ENCODE measurements at regions of chr6 and their contacts with region 1.

Region 1: GRCh38 chr6:52263709-52264540 is 19.6 kb upstream of the IL17F start:
- DNase-seq: peak; percentile 78
- ATAC-seq: peak; percentile 83
- H3K4me3 Mint-ChIP-seq: no peak overlapping the region
- H3K27ac Mint-ChIP-seq: peak overlapping the region; percentile 31
- H3K4me1 Mint-ChIP-seq: peaks cover 12% of the 10 kb centered on the region
- H3K27me3 Mint-ChIP-seq: no peaks in the 10 kb centered on the region
- CTCF ChIP-seq: peak; percentile 90

Region 2: DNA sequence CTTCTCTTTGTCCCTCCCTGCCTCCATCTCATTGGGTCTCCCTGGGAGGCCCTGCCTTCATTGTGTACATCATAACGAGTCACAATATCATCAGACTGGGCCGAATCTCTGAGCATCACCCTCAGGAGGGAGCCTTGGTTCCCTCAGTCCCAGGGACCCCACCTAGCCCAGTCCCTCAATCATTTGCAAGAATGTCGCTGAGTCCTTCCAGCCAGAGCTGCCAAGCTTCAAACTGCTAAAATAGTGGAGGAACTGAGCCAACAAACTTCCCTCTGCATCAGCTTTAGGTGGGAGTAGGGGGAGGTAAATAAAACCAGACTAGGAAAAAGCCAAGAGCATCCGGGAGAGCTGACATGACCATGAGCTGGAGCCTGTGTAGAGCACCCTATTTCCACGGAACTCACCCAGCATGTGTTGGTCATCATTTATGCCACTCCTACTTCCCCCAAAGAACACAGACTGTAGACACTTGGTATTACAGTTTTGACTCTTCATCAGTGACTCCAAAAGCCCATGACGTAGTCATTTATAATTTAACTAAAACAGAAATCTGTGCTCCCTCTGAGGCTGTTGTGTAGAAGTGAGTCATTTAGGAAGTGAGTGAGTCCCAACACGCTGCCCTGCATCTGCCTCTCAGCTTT is 106.5 kb before region 1 on chr6:
- CTCF ChIA-PET with region 1: interaction called, 121 read pairs
- POLR2A ChIA-PET with region 1: interaction called, 9 read pairs
- intact Hi-C with region 1: loop called (anchors 2 kb)
- DNase-seq: peak; percentile 59
- ATAC-seq: peak; percentile 78
- H3K4me3 Mint-ChIP-seq: no peak overlapping the region
- H3K27ac Mint-ChIP-seq: peak overlapping the region; percentile 89
- H3K4me1 Mint-ChIP-seq: peaks cover 56% of the 10 kb centered on the region
- H3K27me3 Mint-ChIP-seq: peaks cover 21% of the 10 kb centered on the region
- CTCF ChIP-seq: no peak

Region 3: DNA sequence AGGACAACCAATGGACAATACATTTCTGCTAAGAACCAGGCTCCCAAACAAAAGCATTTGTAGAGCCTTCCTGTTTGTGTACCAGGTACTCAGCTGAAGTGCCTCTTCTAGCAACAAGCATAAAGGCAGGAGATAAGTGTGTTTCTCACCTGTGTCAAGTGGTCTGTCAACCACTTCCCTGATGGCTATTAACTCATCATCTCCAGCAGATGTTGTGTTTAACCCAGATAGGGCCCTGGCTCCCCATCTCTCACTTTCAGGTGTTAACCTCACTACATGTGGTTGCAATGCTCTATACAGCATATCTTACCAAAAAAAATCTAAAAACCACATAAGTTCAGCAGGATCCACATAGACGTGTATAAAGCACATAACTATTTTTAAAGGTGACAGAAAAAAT is 87.4 kb before region 1 on chr6:
- CTCF ChIA-PET with region 1: interaction called, 39 read pairs
- POLR2A ChIA-PET with region 1: interaction called, 6 read pairs
- intact Hi-C with region 1: no loop called
- DNase-seq: peak; percentile 63
- ATAC-seq: peak; percentile 86
- H3K4me3 Mint-ChIP-seq: no peak overlapping the region
- H3K27ac Mint-ChIP-seq: no peak overlapping the region
- H3K4me1 Mint-ChIP-seq: peaks cover 19% of the 10 kb centered on the region
- H3K27me3 Mint-ChIP-seq: peaks cover 17% of the 10 kb centered on the region
- CTCF ChIP-seq: no peak

Region 4: GRCh38 chr6:52233975-52234823 is 29.7 kb before region 1 on chr6:
- CTCF ChIA-PET with region 1: interaction called, 46 read pairs
- POLR2A ChIA-PET with region 1: interaction called, 5 read pairs
- intact Hi-C with region 1: no loop called
- DNase-seq: peak; percentile 62
- ATAC-seq: peak; percentile 71
- H3K4me3 Mint-ChIP-seq: no peak overlapping the region
- H3K27ac Mint-ChIP-seq: no peak overlapping the region
- H3K4me1 Mint-ChIP-seq: peaks cover 13% of the 10 kb centered on the region
- H3K27me3 Mint-ChIP-seq: peaks cover 44% of the 10 kb centered on the region
- CTCF ChIP-seq: peak; percentile 27

Region 5: GRCh38 chr6:52253494-52253893 is 10.4 kb before region 1 on chr6:
- CTCF ChIA-PET with region 1: interaction called, 33 read pairs
- POLR2A ChIA-PET with region 1: interaction called, 5 read pairs
- intact Hi-C with region 1: no loop called
- DNase-seq: peak; percentile 54
- ATAC-seq: no peak
- H3K4me3 Mint-ChIP-seq: no peak overlapping the region
- H3K27ac Mint-ChIP-seq: no peak overlapping the region
- H3K4me1 Mint-ChIP-seq: peaks cover 40% of the 10 kb centered on the region
- H3K27me3 Mint-ChIP-seq: peaks cover 27% of the 10 kb centered on the region
- CTCF ChIP-seq: no peak

Region 6: GRCh38 chr6:52293067-52293466 is 29.1 kb after region 1 on chr6:
- CTCF ChIA-PET with region 1: no interaction called
- POLR2A ChIA-PET with region 1: no interaction called
- intact Hi-C with region 1: no loop called
- DNase-seq: no peak
- ATAC-seq: no peak
- H3K4me3 Mint-ChIP-seq: no peak overlapping the region
- H3K27ac Mint-ChIP-seq: no peak overlapping the region
- H3K4me1 Mint-ChIP-seq: peaks cover 27% of the 10 kb centered on the region
- H3K27me3 Mint-ChIP-seq: no peaks in the 10 kb centered on the region
- CTCF ChIP-seq: no peak

Measured in activated CD8-positive, alpha-beta T cell treated with anti-CD3 and anti-CD28 coated beads for 36 hours (primary cell).